ENCODE measurements at regions of chr18 and their contacts with region 1.

Region 1: GRCh38 chr18:61322265-61322873 is 10.9 kb upstream of the CDH20 start:
- DNase-seq: peak; percentile 16
- H3K4me3 ChIP-seq: no peak overlapping the region
- CTCF ChIP-seq: peak; percentile 94

Region 2: DNA sequence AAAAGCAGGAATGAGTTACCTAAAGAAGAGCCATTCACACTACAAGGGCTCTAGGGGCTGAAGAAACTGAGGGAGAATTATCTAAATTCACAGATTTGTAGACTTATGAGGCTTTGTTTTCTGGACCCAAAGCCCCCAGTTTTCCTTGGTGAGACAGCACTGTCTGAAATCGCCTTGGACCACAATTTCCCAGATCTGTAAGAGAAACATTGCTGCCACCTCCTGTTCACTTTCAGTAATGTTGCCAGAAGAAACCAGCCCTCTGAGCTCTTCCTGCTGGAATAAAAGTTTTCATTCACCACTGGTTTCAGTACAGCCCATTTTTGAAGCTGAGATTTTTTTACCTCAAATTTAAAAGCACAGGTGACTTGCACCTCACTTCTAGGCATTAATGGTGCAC is 180.1 kb after region 1 on chr18:
- in situ Hi-C with region 1: loop called (anchors 5 kb)
- DNase-seq: peak; percentile 50
- H3K4me3 ChIP-seq: no peak overlapping the region
- CTCF ChIP-seq: peak; percentile 73